ENCODE measurements at regions of chr2 and their contacts with region 1.

Region 1: DNA sequence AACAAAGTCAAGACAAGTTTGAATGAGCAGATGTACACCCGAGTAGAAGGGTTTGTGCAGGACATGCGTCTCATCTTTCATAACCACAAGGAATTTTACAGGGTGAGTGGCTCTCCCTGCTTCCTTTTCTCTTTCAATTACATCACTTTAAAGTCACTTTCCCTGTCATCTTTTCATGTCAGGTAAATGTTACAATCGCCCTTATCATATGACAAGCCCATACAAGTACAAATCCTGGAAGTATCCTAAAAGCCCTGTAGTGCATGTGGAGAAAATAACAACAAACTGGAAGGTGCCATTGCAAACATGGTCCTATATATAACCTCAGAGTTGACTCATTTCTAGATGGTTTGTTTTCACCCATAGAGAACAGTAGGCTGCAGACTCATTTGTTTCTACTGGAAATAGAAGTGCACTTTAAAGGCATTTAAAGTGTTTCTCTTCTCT is 126.0 kb downstream of the SP100 start:
- DNase-seq: no peak
- H3K4me3 Mint-ChIP-seq: no peak overlapping the region
- H3K27ac Mint-ChIP-seq: peak overlapping the region; percentile 68
- H3K4me1 Mint-ChIP-seq: peaks cover 37% of the 10 kb centered on the region
- H3K27me3 Mint-ChIP-seq: no peaks in the 10 kb centered on the region

Region 2: GRCh38 chr2:230472621-230473018 is 69.3 kb before region 1 on chr2:
- intact Hi-C with region 1: loop called (anchors 2 kb)
- DNase-seq: no peak
- H3K4me3 Mint-ChIP-seq: peak overlapping the region; percentile 10
- H3K27ac Mint-ChIP-seq: peak overlapping the region; percentile 91
- H3K4me1 Mint-ChIP-seq: peaks cover 44% of the 10 kb centered on the region
- H3K27me3 Mint-ChIP-seq: no peaks in the 10 kb centered on the region

Region 3: GRCh38 chr2:230762317-230762896 is 220.4 kb after region 1 on chr2:
- intact Hi-C with region 1: no loop called
- DNase-seq: no peak
- H3K4me3 Mint-ChIP-seq: no peak overlapping the region
- H3K27ac Mint-ChIP-seq: no peak overlapping the region
- H3K4me1 Mint-ChIP-seq: peaks cover 58% of the 10 kb centered on the region
- H3K27me3 Mint-ChIP-seq: no peaks in the 10 kb centered on the region

Measured in activated T-helper 2 cell treated with anti-CD3 and anti-CD28 coated beads, Interferon-gamma antibody, Interleukin-2, Interleukin-4, amounts not matched to agents 10 μg/mL and 5 μg/mL and 100 μg/mL, durations not matched to agents 14 hours and 24 hours and 36 hours (primary cell).